Dendritic cell treated with granulocyte-macrophage colony-stimulating factor and Interleukin-4, amounts not matched to agents 40 ng/mL and 50 ng/mL, for 4 days (primary cell): ENCODE measurements at regions of chr11 and their contacts with region 1.

Region 1: DNA sequence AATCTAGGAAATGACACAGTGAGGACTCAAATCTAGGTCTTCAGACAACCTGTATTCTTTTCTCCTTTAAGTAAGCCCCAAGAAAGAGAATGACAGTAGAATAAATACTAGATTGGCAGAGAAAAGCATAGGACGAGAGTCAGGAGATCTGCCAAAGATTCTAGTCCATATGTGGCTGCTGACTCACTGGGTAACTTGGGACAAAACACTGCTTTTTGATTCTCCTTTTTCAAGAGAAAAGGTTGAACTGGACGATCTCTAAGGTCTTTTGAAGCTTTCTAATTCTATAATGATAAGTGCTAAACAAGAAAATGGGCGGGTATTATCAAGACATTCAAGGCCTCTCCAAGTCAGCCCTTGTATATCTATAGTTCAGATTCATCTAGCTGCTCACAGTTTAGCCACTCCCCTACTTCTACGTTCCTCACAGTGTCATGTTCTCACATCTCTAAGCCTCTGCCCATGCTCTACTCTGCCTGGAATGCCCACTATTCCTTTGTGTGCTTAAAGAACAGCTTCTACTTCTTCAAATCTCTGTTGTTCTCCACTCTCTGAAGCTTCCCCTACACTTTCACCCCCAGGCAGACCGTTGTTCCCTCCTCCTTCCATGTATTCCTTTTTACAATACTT is 53.0 kb downstream of the RELT start:
- H3K4me3 Mint-ChIP-seq: no peak overlapping the region
- H3K27ac Mint-ChIP-seq: peak overlapping the region; percentile 37
- H3K4me1 Mint-ChIP-seq: peaks cover 52% of the 10 kb centered on the region
- H3K27me3 Mint-ChIP-seq: no peaks in the 10 kb centered on the region

Region 2: GRCh38 chr11:73414977-73415651 is 14.1 kb before region 1 on chr11:
- intact Hi-C with region 1: no loop called
- H3K4me3 Mint-ChIP-seq: no peak overlapping the region
- H3K27ac Mint-ChIP-seq: no peak overlapping the region
- H3K4me1 Mint-ChIP-seq: peaks cover 56% of the 10 kb centered on the region
- H3K27me3 Mint-ChIP-seq: no peaks in the 10 kb centered on the region

Region 3: GRCh38 chr11:73463359-73463758 is 34.1 kb after region 1 on chr11:
- intact Hi-C with region 1: loop called (anchors 5 kb)
- H3K4me3 Mint-ChIP-seq: no peak overlapping the region
- H3K27ac Mint-ChIP-seq: peak overlapping the region; percentile 1
- H3K4me1 Mint-ChIP-seq: peaks cover 58% of the 10 kb centered on the region
- H3K27me3 Mint-ChIP-seq: no peaks in the 10 kb centered on the region

Region 4: GRCh38 chr11:73493956-73494598 is 64.8 kb after region 1 on chr11:
- intact Hi-C with region 1: loop called (anchors 10 kb)
- H3K4me3 Mint-ChIP-seq: no peak overlapping the region
- H3K27ac Mint-ChIP-seq: peak overlapping the region; percentile 85
- H3K4me1 Mint-ChIP-seq: peaks cover 60% of the 10 kb centered on the region
- H3K27me3 Mint-ChIP-seq: no peaks in the 10 kb centered on the region